ENCODE measurements at regions of chr14 and their contacts with region 1.

Region 1: GRCh38 chr14:36941783-36942521 is 230.5 kb downstream of the SLC25A21 start:
- DNase-seq: peak; percentile 62
- ATAC-seq: peak; percentile 98
- H3K4me3 ChIP-seq: no peak overlapping the region
- H3K27ac ChIP-seq: no peak overlapping the region
- H3K4me1 ChIP-seq: no peaks in the 10 kb centered on the region
- H3K27me3 ChIP-seq: no peaks in the 10 kb centered on the region
- CTCF ChIP-seq: peak; percentile 97
- EP300 ChIP-seq: no peak
- POLR2A ChIP-seq: no peak
- RAD21 ChIP-seq: peak; percentile 84

Region 2: GRCh38 chr14:35963209-35963608 is 978.7 kb before region 1 on chr14:
- CTCF ChIA-PET with region 1: no interaction called
- POLR2A ChIA-PET with region 1: no interaction called
- in situ Hi-C with region 1: no loop called
- intact Hi-C with region 1: loop called (anchors 1 kb)
- DNase-seq: peak; percentile 45
- ATAC-seq: peak; percentile 93
- H3K4me3 ChIP-seq: no peak overlapping the region
- H3K27ac ChIP-seq: no peak overlapping the region
- H3K4me1 ChIP-seq: no peaks in the 10 kb centered on the region
- H3K27me3 ChIP-seq: peaks cover 0 to 3% of the 10 kb centered on the region in 2 experiments; a peak in 1 of 5 replicates
- CTCF ChIP-seq: peak; percentile 48
- EP300 ChIP-seq: no peak
- POLR2A ChIP-seq: no peak
- RAD21 ChIP-seq: no peak

Region 3: GRCh38 chr14:36773136-36773540 is 168.8 kb before region 1 on chr14:
- CTCF ChIA-PET with region 1: no interaction called
- POLR2A ChIA-PET with region 1: no interaction called
- in situ Hi-C with region 1: no loop called
- intact Hi-C with region 1: loop called (anchors 1 kb)
- DNase-seq: peak; percentile 51
- ATAC-seq: peak; percentile 80
- H3K4me3 ChIP-seq: no peak overlapping the region
- H3K27ac ChIP-seq: no peak overlapping the region
- H3K4me1 ChIP-seq: 0 out of 2 replicates have a peak, but pooled peaks cover 4% of the 10 kb centered on the region
- H3K27me3 ChIP-seq: no peaks in the 10 kb centered on the region
- CTCF ChIP-seq: no peak
- EP300 ChIP-seq: no peak
- POLR2A ChIP-seq: no peak
- RAD21 ChIP-seq: no peak

Region 4: GRCh38 chr14:37023875-37024565 is 82.1 kb after region 1 on chr14:
- CTCF ChIA-PET with region 1: no interaction called
- POLR2A ChIA-PET with region 1: no interaction called
- in situ Hi-C with region 1: no loop called
- intact Hi-C with region 1: no loop called
- DNase-seq: peak; percentile 35
- ATAC-seq: peak; percentile 85
- H3K4me3 ChIP-seq: no peak overlapping the region
- H3K27ac ChIP-seq: no peak overlapping the region
- H3K4me1 ChIP-seq: no peaks in the 10 kb centered on the region
- H3K27me3 ChIP-seq: no peaks in the 10 kb centered on the region
- CTCF ChIP-seq: peak; percentile 45
- EP300 ChIP-seq: no peak
- POLR2A ChIP-seq: no peak
- RAD21 ChIP-seq: no peak

Region 5: DNA sequence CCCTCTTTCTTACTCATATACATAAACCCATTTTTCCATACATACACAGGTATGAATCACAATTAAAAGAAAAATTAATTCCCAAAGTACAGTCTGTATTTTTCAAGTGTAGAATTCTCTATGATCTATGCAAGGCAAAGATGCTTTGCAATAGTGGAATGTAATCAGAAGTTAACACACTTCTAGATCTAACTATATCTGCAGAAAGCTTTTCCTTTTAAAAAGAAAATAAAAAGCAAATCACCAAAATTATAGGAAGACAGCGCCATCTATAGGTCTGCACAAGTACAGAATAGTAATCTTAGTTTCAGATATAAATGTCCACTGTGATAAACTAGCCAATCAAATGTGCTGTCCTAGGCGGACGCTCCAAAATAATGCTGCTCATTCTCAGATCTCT is 208.5 kb after region 1 on chr14:
- CTCF ChIA-PET with region 1: interaction called, 12 read pairs
- POLR2A ChIA-PET with region 1: no interaction called
- in situ Hi-C with region 1: no loop called
- intact Hi-C with region 1: loop called (anchors 1 kb)
- DNase-seq: peak; percentile 63
- ATAC-seq: peak; percentile 75
- H3K4me3 ChIP-seq: no peak overlapping the region
- H3K27ac ChIP-seq: no peak overlapping the region
- H3K4me1 ChIP-seq: no peaks in the 10 kb centered on the region
- H3K27me3 ChIP-seq: no peaks in the 10 kb centered on the region
- CTCF ChIP-seq: peak; percentile 78
- EP300 ChIP-seq: no peak
- POLR2A ChIP-seq: no peak
- RAD21 ChIP-seq: no peak

Measured in HepG2 (cell line).